Naive thymus-derived CD8-positive, alpha-beta T cell (primary cell): ENCODE measurements at regions of chr15 and their contacts with region 1.

Region 1: DNA sequence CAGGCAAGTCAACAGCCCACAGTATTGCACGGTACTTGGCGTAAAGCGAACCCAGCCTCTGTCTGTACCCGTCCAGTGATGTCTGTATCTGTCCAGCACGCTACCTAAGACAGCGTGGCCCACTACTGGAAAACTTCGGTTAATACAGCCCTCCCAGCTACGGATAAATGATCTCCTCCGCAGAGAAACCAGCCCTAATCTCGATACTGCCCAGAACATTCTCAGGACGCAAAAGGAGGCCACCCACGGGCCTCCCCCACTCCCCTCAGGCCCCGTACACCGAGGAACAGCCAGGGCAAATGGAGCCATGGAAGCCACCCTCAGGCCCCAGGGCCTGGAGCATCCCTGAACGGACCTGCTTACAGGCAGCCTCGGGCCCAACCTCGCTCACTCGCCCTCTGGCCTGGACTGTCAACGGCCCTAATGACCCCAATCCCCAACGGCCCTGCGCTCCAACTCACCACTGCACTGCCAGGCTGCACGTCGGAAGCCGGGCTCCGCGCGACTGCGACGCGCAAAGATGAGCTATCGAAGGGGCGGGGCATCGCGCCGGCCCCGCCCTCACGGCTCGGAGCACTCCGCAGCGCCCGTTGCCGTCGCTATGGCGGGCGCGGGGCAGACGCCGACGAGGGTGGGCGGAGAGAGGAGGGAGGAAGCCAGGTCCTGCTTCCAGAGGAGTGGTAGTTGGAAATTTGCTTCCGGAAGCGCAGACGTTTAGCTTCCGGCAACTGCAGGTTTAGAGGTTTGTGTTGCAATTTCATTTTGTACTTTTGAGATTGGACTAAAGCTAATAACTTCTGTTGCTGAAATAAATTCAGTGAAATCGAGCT is at the start of gene SKIC8:
- DNase-seq: peak; percentile 84 to 92 (median 90)
- ATAC-seq: peak; percentile 97
- H3K4me3 Mint-ChIP-seq: peak within 1 kb of the TSS; percentile 91 to 98 (median 97)
- H3K27ac Mint-ChIP-seq: peak within 1 kb of the TSS; percentile 88 to 98 (median 95)
- H3K4me1 Mint-ChIP-seq: peaks cover 17 to 34% (median 25%) of the 10 kb centered on the region in 4 donors
- H3K27me3 Mint-ChIP-seq: no peaks in the 10 kb centered on the region
- polyA plus RNA-seq, gene SKIC8: 98.8 to 117 (median 107) TPM

Region 2: DNA sequence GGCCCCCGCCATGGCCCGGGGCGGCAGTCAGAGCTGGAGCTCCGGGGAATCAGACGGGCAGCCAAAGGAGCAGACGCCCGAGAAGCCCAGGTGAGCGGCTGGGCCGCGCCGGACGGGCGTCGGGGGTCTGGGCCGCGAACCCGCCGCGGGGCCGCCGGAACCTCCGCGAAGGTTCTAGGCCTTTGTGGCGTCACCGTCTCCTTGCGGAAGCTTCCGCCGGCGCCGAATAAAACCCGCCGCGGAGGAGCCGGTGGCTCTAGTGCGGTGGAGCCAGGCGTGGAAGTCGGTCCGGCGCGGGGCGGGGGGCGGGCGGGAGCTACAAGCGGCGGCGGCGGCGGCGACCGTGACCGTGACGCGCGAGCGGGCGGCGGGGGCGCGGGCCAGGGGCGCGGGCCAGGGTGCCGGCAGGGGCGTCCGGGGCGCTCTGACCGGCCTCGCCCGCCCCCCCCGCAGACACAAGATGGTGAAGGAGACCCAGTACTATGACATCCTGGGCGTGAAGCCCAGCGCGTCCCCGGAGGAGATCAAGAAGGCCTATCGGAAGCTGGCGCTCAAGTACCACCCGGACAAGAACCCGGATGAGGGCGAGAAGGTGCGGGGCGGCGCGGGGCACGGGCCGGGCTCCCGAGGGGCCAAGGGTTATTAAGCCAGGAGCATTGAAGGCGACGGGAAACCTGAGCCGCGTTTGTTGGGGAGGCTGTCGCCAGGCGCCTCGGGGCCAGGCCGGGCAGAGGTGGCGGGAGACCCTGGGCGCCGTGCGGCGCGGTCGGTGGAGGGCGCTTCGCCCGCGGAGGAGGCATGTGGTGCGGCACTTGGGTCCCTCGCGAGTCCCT is 34.8 kb before region 1 on chr15 and contains the start of gene DNAJA4:
- POLR2A ChIA-PET with region 1: interaction called, 53 read pairs
- DNase-seq: peak; percentile 59 to 85 (median 68)
- ATAC-seq: peak; percentile 83 to 84
- H3K4me3 Mint-ChIP-seq: peak within 1 kb of the TSS; percentile 84 to 94 (median 90)
- H3K27ac Mint-ChIP-seq: peak within 1 kb of the TSS; percentile 80 to 98 (median 94)
- H3K4me1 Mint-ChIP-seq: peaks cover 21 to 41% (median 31%) of the 10 kb centered on the region in 4 donors
- H3K27me3 Mint-ChIP-seq: no peaks in the 10 kb centered on the region
- polyA plus RNA-seq, gene DNAJA4: 7.9 to 15.6 (median 9.1) TPM

Region 3: DNA sequence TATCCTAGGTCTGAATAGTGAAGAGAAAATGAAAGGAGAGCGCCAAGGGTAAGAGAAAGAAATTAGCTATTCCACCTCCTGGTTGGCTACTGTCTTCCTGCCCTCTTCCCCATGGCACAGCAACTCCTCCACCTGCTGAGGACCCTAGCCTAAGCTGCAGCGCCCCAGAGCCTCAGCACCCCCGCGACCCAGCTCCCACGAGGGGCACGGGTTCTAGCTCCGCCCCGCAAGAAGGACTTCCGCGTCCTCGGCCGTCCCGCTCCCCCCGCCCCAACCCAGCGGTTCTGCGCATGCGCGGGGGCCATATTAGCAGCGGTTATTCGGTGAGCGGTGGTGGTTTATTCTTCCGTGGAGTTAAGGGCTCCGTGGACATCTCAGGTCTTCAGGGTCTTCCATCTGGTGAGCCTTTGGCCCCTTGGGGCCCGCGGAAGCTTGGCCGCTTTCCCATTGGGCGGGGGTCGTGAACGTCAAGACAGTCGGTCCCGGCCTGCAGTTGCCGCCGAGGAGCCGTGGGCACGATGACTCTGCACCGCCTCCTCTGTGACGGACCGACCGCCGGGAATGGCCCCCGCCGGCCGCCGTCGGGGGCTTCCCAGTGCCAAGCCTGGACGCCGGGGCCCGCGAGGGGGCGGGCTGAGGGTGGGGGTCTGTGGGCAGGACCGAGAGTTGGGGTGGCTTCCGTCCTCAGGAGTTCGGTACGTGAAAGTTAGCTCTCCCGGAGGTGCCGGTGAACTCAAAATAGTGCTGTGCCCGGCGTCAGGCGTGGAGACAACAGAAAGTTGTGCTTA is 241.0 kb after region 1 on chr15 and contains the start of gene PSMA4:
- POLR2A ChIA-PET with region 1: interaction called, 10 read pairs
- DNase-seq: peak; percentile 85 to 99 (median 94)
- ATAC-seq: peak; percentile 87
- H3K4me3 Mint-ChIP-seq: peak within 1 kb of the TSS; percentile 87 to 99 (median 96)
- H3K27ac Mint-ChIP-seq: peak within 1 kb of the TSS; percentile 98 to 100 (median 99)
- H3K4me1 Mint-ChIP-seq: peaks cover 12 to 33% (median 28%) of the 10 kb centered on the region in 4 donors
- H3K27me3 Mint-ChIP-seq: no peaks in the 10 kb centered on the region
- polyA plus RNA-seq, gene PSMA4: 170 to 218 (median 190) TPM